CD8-positive, alpha-beta T cell (primary cell): ENCODE measurements at regions of chr17 and their contacts with region 1.

Region 1: GRCh38 chr17:32444308-32445073 is at the start of gene PSMD11:
- DNase-seq: peak; percentile 97 to 99 (median 99)
- ATAC-seq: peak; percentile 97
- H3K4me3 ChIP-seq: peak within 1 kb of the TSS; percentile 71 to 97
- H3K4me3 Mint-ChIP-seq: peak within 1 kb of the TSS; percentile 85
- H3K27ac ChIP-seq: peak within 1 kb of the TSS; percentile 71 to 72
- H3K27ac Mint-ChIP-seq: peak within 1 kb of the TSS; percentile 86
- H3K4me1 ChIP-seq: peaks cover 31% of the 10 kb centered on the region
- H3K4me1 Mint-ChIP-seq: peaks cover 36% of the 10 kb centered on the region
- H3K27me3 ChIP-seq: no peaks in the 10 kb centered on the region
- H3K27me3 Mint-ChIP-seq: no peaks in the 10 kb centered on the region
- CTCF ChIP-seq: peak; percentile 95
- total RNA-seq, gene PSMD11: 69.9 to 72.6 TPM

Region 2: GRCh38 chr17:30906101-30906911 is 1538.2 kb before region 1 on chr17 and contains the start of gene TEFM:
- CTCF ChIA-PET with region 1: no interaction called
- POLR2A ChIA-PET with region 1: no interaction called
- intact Hi-C with region 1: loop called in 1 of 2 experiments (anchors 5 kb)
- DNase-seq: peak; percentile 77 to 94 (median 85)
- ATAC-seq: peak; percentile 96
- H3K4me3 ChIP-seq: peak within 1 kb of the TSS; percentile 88
- H3K4me3 Mint-ChIP-seq: peak within 1 kb of the TSS; percentile 94
- H3K27ac ChIP-seq: peak within 1 kb of the TSS; percentile 78 to 85
- H3K27ac Mint-ChIP-seq: peak within 1 kb of the TSS; percentile 92
- H3K4me1 ChIP-seq: peaks cover 14% of the 10 kb centered on the region
- H3K4me1 Mint-ChIP-seq: peaks cover 45% of the 10 kb centered on the region
- H3K27me3 ChIP-seq: no peaks in the 10 kb centered on the region
- H3K27me3 Mint-ChIP-seq: no peaks in the 10 kb centered on the region
- CTCF ChIP-seq: no peak
- total RNA-seq, gene TEFM: 8.4 to 8.9 TPM

Region 3: GRCh38 chr17:31858642-31859473 is 585.6 kb before region 1 on chr17 and contains the start of gene COPRS:
- CTCF ChIA-PET with region 1: no interaction called
- POLR2A ChIA-PET with region 1: no interaction called
- intact Hi-C with region 1: loop called in 1 of 2 experiments (anchors 2 kb)
- DNase-seq: peak; percentile 53 to 88 (median 77)
- ATAC-seq: peak; percentile 92
- H3K4me3 ChIP-seq: peak within 1 kb of the TSS; percentile 53 to 69
- H3K4me3 Mint-ChIP-seq: peak within 1 kb of the TSS; percentile 86
- H3K27ac ChIP-seq: no peak within 1 kb of the TSS
- H3K27ac Mint-ChIP-seq: peak within 1 kb of the TSS; percentile 15
- H3K4me1 ChIP-seq: peaks cover 14% of the 10 kb centered on the region
- H3K4me1 Mint-ChIP-seq: peaks cover 16% of the 10 kb centered on the region
- H3K27me3 ChIP-seq: no peaks in the 10 kb centered on the region
- H3K27me3 Mint-ChIP-seq: no peaks in the 10 kb centered on the region
- CTCF ChIP-seq: no peak
- total RNA-seq, gene COPRS: 2.4 to 2.6 TPM

Region 4: DNA sequence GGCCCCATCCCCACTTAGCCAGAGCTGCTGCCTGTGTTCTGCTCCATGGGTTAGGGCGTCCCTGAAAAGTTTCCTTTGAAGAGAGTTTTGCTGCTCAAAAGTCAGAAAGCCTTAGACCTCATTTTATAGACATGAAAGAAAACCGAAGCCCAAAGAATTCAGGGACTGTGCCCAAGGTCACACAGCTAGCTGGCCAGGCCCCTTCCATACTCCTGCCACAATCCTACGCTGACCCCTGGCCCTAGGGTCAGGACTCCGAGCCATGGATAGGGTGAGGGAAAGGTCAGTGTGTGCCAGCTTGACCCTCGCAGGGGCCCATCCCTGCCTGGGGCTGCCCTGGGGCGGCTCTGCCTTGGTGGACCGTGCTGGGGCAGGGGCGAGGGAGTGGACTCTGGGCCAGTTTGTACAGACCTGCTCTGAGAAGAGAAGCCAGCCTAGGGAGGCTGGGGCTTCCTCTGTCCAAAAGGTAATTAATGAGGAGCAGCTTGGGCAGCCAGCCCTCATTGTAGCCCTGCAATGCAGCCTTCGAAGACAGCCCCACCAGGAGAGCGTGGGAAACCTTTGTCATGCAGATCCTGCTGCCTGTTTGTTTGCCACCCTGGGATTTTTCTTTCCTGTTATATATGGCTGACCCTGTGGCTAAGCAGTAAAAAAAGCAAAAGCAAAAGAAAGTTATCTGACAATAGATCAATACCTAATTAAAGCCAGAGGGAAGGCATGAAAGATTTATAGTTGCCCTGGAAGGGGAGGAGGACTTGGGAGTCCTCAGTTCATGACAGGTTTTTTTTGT is 141.4 kb before region 1 on chr17:
- CTCF ChIA-PET with region 1: no interaction called
- POLR2A ChIA-PET with region 1: no interaction called
- intact Hi-C with region 1: no loop called
- DNase-seq: no peak
- ATAC-seq: no peak
- H3K4me3 ChIP-seq: no peak overlapping the region
- H3K4me3 Mint-ChIP-seq: no peak overlapping the region
- H3K27ac ChIP-seq: no peak overlapping the region
- H3K27ac Mint-ChIP-seq: no peak overlapping the region
- H3K4me1 ChIP-seq: no peaks in the 10 kb centered on the region
- H3K4me1 Mint-ChIP-seq: no peaks in the 10 kb centered on the region
- H3K27me3 ChIP-seq: no peaks in the 10 kb centered on the region
- H3K27me3 Mint-ChIP-seq: no peaks in the 10 kb centered on the region
- CTCF ChIP-seq: no peak

Region 5: GRCh38 chr17:32349854-32350665 is 94.4 kb before region 1 on chr17 and contains the start of gene ZNF207:
- CTCF ChIA-PET with region 1: interaction called, 3 read pairs
- POLR2A ChIA-PET with region 1: interaction called, 10 read pairs
- intact Hi-C with region 1: loop called (anchors 1 kb)
- DNase-seq: peak; percentile 90 to 99 (median 94)
- ATAC-seq: peak; percentile 98
- H3K4me3 ChIP-seq: peak within 1 kb of the TSS; percentile 94 to 97
- H3K4me3 Mint-ChIP-seq: peak within 1 kb of the TSS; percentile 96
- H3K27ac ChIP-seq: peak within 1 kb of the TSS; percentile 90 to 99
- H3K27ac Mint-ChIP-seq: peak within 1 kb of the TSS; percentile 98
- H3K4me1 ChIP-seq: peaks cover 34% of the 10 kb centered on the region
- H3K4me1 Mint-ChIP-seq: peaks cover 34% of the 10 kb centered on the region
- H3K27me3 ChIP-seq: no peaks in the 10 kb centered on the region
- H3K27me3 Mint-ChIP-seq: no peaks in the 10 kb centered on the region
- CTCF ChIP-seq: no peak
- total RNA-seq, gene ZNF207: 276 to 277 TPM

Region 6: GRCh38 chr17:32461853-32462617 is 17.5 kb after region 1 on chr17:
- CTCF ChIA-PET with region 1: interaction called, 50 read pairs
- POLR2A ChIA-PET with region 1: interaction called, 5 read pairs
- intact Hi-C with region 1: loop called in 1 of 2 experiments (anchors 2 kb)
- DNase-seq: peak; percentile 40 to 81 (median 67)
- ATAC-seq: peak; percentile 91
- H3K4me3 ChIP-seq: no peak overlapping the region
- H3K4me3 Mint-ChIP-seq: no peak overlapping the region
- H3K27ac ChIP-seq: no peak overlapping the region
- H3K27ac Mint-ChIP-seq: peak overlapping the region; percentile 38
- H3K4me1 ChIP-seq: peaks cover 4% of the 10 kb centered on the region
- H3K4me1 Mint-ChIP-seq: peaks cover 23% of the 10 kb centered on the region
- H3K27me3 ChIP-seq: no peaks in the 10 kb centered on the region
- H3K27me3 Mint-ChIP-seq: no peaks in the 10 kb centered on the region
- CTCF ChIP-seq: peak; percentile 56